Cardiac septum (tissue), 1 donor: ENCODE measurements at regions of chr6 and their contacts with region 1.

Region 1: GRCh38 chr6:17392978-17393891 is at the start of gene CAP2:
- DNase-seq: peak; percentile 84
- total RNA-seq, gene CAP2: 120 TPM

Region 2: DNA sequence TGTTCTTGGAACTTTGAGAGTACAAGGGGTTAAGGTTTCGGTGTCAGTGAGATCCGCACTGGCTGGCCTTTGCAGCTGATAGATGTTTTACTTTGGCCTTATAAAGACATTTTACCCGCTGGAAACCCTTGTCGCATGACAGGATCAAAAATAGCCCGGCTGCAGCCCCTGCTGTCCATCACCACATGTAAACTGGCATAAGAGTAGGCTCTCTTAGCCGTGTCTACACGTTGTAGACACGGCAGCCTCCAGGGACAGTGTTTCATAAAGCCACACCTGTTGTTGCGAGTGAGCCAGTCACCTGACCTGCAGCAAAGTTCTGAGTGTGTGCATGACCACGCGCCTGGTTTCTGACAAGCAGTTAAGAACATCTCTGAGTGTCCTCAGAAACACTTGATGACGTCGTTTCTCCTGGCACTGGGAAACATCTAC is 103.6 kb before region 1 on chr6:
- intact Hi-C with region 1: loop called (anchors 5 kb)
- DNase-seq: no peak

Region 3: GRCh38 chr6:17417817-17418216 is 24.6 kb after region 1 on chr6:
- intact Hi-C with region 1: loop called (anchors 2 kb)
- DNase-seq: no peak